Activated CD4-positive, alpha-beta memory T cell treated with anti-CD3 and anti-CD28 coated beads, Interleukin-2, amount 10 ng/mL, durations not matched to agents 7 days and 5 days (primary cell): ENCODE measurements at regions of chr2 and their contacts with region 1.

Region 1: DNA sequence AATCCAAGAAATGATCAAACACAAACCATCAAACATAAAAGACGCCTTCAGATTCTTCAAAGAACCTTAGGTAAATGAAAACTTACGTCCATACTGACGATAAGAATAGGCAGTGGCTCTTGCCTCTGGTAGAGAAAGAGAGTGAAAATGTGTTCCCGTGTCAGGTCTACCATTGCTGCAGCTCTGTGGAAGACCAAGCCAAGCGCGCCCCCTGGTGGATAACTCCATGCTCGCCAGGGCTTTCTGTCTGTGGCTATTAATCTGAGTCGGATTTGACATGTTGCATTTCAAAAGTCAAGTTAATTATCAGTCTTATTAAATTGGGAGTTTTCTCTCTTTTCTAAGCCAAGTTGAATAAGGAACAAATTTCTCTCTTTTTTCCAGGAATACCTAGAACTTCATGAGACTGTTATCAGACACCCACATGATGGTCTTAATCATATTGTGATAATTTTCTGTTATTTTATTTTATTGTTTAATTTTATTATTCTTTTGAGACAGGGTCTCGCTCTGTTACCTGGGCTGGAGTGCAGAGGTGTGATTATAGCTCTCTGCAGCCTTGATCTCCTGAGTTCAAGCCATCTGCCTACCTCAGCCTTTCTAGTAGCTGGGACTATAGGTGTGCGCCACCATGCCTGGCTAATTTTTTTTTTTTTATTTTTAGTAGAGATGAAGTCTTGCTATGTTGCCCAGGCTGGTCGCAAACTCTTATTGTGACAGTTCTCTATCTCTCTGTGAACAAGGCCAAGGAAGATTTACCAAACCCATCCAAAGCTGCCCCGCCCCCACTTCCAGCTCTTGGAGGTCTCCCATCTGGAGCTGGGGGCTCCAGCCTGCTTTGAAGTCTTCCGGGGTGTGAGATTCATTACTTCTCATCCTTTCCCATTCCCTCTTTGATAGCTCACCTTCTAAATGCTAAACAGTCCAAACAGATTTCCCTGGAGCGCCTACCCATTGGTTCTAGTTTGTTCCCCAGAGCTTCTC is 15.8 kb upstream of the ZAP70 start:
- DNase-seq: peak; percentile 93
- H3K4me3 Mint-ChIP-seq: no peak overlapping the region
- H3K27ac Mint-ChIP-seq: no peak overlapping the region
- H3K4me1 Mint-ChIP-seq: peaks cover 10% of the 10 kb centered on the region
- H3K27me3 Mint-ChIP-seq: peaks cover 2% of the 10 kb centered on the region

Region 2: DNA sequence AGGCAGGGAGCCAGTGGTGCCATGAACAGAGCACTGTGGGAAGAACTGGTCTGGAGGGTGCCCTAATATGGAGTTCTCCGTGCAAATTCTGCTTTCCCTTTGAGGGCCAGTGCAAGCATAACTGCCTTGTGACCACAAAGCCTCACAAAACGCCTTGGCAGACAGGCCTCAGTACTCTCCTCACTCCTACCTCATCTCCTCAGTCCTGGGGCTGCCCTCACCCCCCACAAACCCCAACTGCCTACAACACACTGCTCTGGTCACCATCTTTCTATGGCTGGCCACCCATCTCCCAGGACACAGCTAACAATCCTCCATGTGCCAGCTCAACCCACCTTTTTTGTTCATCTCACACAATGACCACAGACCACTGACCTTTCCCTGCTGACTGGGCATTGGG is 42.8 kb before region 1 on chr2:
- CTCF ChIA-PET with region 1: interaction called, 24 read pairs
- POLR2A ChIA-PET with region 1: no interaction called
- DNase-seq: no peak
- H3K4me3 Mint-ChIP-seq: no peak overlapping the region
- H3K27ac Mint-ChIP-seq: no peak overlapping the region
- H3K4me1 Mint-ChIP-seq: peaks cover under 1% of the 10 kb centered on the region
- H3K27me3 Mint-ChIP-seq: no peaks in the 10 kb centered on the region

Region 3: DNA sequence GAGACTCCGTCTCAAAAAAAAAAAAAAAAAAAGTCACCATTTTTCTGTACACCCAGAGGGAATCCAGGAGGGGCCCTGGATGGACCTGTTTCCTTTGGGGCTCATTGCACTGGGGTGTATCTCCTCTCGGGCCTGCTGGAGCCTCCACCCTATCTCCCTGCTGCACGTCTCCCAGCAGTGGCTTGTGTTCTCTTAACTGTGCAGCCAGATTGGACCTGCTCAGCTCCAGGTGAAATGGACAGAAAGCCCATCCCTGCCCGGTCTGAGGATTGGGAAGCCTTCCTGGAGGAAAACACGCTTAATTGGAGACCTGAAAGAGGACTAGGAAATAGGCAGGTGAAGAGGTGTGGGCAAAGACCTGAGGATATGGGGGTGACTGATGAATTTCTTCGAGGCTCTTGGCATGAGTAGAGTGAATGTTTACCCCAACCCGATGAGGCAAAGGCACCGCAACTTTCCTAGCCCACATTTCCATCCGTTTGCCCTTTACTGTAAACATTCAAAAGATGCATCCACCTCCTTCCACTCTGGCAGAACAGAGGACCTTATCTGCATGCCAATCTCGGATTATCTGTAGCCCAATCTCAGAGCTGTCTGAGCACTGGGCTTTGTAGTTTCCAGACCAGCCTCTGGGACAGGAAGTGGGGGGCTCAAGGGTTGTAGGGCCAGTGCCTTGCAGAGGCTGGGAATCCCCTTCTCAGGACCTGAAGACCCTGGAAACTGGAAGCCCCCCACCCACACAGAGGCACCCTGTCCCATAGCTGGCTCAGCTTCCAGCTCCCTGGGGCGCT is 13.2 kb after region 1 on chr2:
- CTCF ChIA-PET with region 1: interaction called, 47 read pairs
- POLR2A ChIA-PET with region 1: interaction called, 11 read pairs
- DNase-seq: no peak
- H3K4me3 Mint-ChIP-seq: no peak overlapping the region
- H3K27ac Mint-ChIP-seq: no peak overlapping the region
- H3K4me1 Mint-ChIP-seq: peaks cover 49% of the 10 kb centered on the region
- H3K27me3 Mint-ChIP-seq: no peaks in the 10 kb centered on the region

Region 4: DNA sequence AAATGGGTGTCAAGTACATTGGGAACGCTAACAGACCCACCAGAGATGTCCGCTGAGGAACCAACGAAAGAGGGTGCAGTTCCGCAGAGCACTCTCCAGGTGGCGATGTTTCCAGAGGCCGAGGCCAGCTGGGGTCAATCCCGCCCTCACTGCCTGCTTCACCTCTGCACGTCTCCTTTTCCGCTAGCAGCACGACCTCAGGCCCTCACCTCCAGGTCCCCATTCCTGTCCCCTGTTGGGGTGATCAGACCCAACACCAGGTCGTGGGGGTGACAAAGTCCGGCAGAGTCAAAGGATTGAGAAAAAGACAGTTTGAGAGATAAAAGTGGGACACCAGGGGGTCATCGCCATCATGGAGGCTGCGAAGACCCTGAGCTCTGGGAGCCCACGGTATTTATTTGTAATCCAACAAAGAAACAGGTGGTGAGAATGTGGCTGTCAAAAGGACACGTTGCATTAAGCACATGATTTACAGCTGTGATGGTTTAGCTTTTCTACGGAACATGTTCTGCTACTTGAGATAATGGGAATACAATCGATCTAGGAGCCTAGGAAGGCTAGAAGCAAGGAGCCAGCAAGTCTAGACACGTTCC is 43.1 kb after region 1 on chr2:
- CTCF ChIA-PET with region 1: interaction called, 31 read pairs
- POLR2A ChIA-PET with region 1: interaction called, 6 read pairs
- DNase-seq: peak; percentile 46
- H3K4me3 Mint-ChIP-seq: no peak overlapping the region
- H3K27ac Mint-ChIP-seq: peak overlapping the region; percentile 99
- H3K4me1 Mint-ChIP-seq: peaks cover 66% of the 10 kb centered on the region
- H3K27me3 Mint-ChIP-seq: no peaks in the 10 kb centered on the region

Region 5: GRCh38 chr2:97766567-97766966 is 69.0 kb after region 1 on chr2:
- CTCF ChIA-PET with region 1: interaction called, 12 read pairs
- POLR2A ChIA-PET with region 1: interaction called, 3 read pairs
- DNase-seq: no peak
- H3K4me3 Mint-ChIP-seq: no peak overlapping the region
- H3K27ac Mint-ChIP-seq: no peak overlapping the region
- H3K4me1 Mint-ChIP-seq: peaks cover 18% of the 10 kb centered on the region
- H3K27me3 Mint-ChIP-seq: no peaks in the 10 kb centered on the region

Region 6: GRCh38 chr2:97785818-97786217 is 88.3 kb after region 1 on chr2:
- CTCF ChIA-PET with region 1: no interaction called
- POLR2A ChIA-PET with region 1: no interaction called
- DNase-seq: no peak
- H3K4me3 Mint-ChIP-seq: no peak overlapping the region
- H3K27ac Mint-ChIP-seq: no peak overlapping the region
- H3K4me1 Mint-ChIP-seq: no peaks in the 10 kb centered on the region
- H3K27me3 Mint-ChIP-seq: no peaks in the 10 kb centered on the region

Region 7: DNA sequence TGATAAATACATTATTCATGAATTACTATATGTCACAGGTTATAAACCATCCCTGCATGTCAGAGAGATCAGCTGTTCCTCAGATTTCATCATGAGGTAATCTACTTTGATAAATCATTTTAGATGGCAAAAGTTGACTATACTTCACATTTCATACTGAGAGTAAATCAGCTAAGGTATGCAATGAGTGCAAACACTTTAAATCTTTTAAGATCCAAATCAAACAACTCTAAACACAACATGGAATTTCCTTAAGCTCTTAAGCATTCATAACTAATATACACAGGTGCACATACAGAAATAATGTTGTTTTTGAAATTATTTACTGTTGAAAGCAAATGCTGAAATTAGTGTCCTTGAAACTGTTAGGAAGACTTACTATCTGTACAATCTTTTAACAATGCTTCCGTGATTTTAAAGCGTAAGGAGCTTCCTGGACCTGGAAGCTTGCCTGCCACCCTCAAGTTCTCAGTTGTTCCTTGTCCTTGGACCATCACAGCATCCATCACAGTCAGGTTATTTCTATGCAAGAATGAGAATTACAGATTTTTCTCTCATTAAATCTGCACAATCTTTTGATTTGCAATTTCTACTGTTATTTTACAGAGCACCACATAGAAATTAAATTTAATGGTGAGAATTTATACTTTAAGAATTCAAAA is 99.1 kb after region 1 on chr2:
- CTCF ChIA-PET with region 1: no interaction called
- POLR2A ChIA-PET with region 1: no interaction called
- DNase-seq: no peak
- H3K4me3 Mint-ChIP-seq: no peak overlapping the region
- H3K27ac Mint-ChIP-seq: no peak overlapping the region
- H3K4me1 Mint-ChIP-seq: no peaks in the 10 kb centered on the region
- H3K27me3 Mint-ChIP-seq: no peaks in the 10 kb centered on the region

Region 8: DNA sequence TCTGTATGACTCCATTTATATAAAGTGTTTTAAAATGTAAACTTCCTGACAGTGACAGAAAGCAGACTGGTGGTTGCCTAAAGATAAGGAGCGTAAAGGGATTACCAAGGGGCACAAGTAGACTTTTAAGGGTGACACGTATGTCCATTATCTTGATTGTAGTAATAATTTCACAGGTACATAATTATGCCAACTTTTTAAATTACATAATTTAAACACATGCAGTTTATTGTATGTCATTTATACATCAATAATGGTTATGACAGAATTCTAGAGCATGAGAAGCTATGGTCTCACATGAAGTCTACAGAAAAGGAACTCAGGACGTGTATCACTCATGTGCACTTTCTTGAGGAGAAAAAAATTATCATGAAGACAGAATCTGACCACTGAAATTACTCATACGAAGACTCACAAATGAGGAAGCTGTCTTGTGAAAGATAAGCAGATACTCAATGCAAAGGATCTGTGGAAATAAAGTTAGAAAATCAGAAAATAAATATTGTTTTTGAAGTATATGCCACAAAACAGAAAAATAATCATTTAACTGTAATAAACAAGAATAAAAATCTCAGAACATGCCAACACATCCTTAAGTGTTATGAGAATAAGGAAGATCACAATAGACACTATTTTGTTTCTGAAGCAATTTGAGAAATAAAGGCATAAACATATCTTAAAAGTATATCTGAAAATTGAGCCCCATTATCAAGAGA is 213.8 kb after region 1 on chr2:
- CTCF ChIA-PET with region 1: no interaction called
- POLR2A ChIA-PET with region 1: no interaction called
- DNase-seq: no peak
- H3K4me3 Mint-ChIP-seq: no peak overlapping the region
- H3K27ac Mint-ChIP-seq: no peak overlapping the region
- H3K4me1 Mint-ChIP-seq: peaks cover 36% of the 10 kb centered on the region
- H3K27me3 Mint-ChIP-seq: no peaks in the 10 kb centered on the region